ENCODE measurements at regions of chr1 and their contacts with region 1.

Region 1: DNA sequence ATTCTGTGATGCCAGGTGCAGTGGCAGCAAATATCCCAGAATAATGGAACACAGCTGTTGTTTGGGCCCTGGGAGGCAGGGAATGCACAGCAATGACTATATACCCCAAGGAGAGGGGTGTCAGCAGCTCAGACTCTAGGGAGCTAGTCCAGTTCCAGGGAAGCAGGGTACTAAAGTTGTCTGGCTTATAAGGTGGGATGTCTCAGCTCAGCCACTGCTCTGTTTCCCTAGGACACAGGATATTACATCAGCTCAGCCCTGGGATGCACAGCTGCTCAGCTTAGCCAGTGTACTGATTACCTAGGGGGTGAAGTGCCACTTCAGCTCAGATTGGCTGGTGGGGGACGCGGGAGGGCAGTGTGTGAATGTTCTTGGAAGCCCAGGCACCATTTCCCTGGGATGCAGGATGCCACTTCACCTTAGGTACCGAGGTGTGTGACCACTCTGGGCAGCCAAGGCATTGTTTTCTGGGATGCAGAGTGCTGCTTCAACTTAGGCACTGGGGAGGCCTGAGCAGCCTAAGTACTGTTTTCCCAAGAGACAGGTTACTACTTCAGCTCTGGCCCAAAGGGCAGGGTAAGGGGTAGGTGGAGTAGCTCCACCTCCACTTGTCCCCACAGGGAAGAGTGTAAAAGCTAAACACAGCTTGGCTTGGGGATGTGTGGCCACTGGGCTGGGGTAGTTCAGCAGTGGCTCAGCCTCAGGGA is 59.4 kb downstream of the DIPK1A start:
- DNase-seq: no peak
- CTCF ChIP-seq: no peak

Region 2: GRCh38 chr1:92882819-92883218 is 19.0 kb before region 1 on chr1:
- CTCF ChIA-PET with region 1: interaction called, 11 read pairs
- POLR2A ChIA-PET with region 1: no interaction called
- DNase-seq: no peak
- CTCF ChIP-seq: no peak

Region 3: DNA sequence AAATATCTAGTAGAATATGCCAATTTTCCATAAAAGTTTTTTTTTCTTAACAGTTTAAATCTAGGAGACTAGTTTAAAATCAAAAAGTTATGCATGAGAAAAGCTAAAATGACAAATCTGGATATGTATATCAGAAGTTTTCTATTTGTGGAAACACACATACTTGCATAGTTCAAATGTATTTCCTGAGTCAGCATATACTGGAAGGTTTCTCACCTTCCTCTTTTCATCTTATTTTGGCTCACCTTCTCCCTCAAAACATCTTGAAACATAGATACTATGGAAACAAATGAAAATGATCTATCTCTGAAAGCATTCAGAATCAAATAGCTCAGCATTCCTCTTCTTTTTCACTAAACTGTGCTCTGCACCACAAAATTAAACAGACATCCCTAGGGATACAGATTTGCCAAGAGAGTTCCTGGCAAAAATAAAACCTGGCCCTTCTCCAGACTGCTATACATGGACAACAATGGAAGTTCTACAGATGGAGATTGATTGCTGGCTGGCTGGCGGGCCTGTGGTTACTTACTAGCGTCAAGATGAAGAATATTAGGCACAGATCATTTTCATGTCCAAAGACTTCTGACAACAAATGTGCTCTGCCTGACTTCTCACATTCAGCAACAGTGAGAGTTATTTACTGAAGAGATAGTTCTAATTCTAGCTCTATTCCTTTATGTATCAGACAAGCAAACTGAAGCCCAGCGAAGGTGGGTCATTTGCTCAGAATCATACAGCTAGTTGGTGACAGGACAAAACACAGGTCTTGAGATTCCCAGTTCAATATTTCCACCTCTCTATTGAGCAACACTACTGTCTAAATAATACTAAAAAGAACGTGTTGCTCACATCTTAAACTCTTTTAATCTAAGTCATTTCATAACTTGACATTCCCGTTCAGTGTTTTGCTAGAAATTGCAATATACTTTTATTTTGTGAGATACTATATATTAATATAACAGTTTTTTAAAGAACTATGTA is 32.8 kb after region 1 on chr1:
- CTCF ChIA-PET with region 1: interaction called, 14 read pairs
- POLR2A ChIA-PET with region 1: no interaction called
- DNase-seq: no peak
- CTCF ChIP-seq: no peak

Region 4: GRCh38 chr1:92960395-92961130 is 58.7 kb after region 1 on chr1:
- CTCF ChIA-PET with region 1: interaction called, 10 read pairs
- POLR2A ChIA-PET with region 1: no interaction called
- DNase-seq: peak; percentile 73
- CTCF ChIP-seq: peak; percentile 77

Region 5: DNA sequence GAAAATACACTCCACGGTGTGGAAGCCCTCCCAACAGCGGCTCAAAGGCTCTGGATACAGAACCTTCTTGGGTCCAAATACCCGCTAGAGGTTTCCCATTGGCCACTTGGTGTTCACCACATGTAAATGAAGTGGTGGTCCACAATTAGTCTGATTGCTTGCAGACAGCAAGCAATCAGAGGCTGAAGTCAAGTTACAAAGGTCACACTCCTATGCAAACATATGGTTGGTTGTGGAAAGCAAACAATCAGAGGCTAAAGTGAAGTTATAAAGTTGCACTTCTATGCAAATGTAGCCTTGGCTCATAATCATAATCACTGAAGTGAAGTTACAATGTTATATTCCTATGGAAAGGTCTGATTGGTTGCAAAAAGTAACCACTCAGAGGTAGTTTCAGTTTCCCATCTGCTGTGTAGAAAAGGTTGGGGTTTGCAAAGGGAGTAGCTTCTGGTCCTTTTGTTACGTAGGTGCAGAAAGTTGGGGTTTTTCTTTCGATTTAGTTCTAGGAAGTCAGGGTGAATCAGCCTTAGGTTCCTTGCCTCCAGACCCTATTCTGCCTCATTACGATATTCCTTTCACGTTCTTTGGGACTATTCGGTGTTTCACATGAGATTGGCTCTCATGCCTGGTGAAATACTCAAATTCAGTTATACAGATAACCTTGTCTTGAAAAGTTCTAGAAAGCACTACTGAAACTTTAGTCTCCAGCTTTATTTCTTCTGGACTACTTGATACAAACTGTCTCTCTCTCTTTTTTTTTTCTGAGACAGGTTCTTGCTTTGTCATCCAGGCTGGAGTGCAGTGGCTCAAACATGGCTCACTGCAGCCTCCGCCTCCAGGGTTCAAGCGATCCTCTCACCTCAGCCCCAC is 140.6 kb after region 1 on chr1:
- CTCF ChIA-PET with region 1: no interaction called
- POLR2A ChIA-PET with region 1: no interaction called
- DNase-seq: peak; percentile 60
- CTCF ChIP-seq: no peak